Endothelial cell of umbilical vein (primary cell): ENCODE measurements at regions of chr9 and their contacts with region 1.

Region 1: DNA sequence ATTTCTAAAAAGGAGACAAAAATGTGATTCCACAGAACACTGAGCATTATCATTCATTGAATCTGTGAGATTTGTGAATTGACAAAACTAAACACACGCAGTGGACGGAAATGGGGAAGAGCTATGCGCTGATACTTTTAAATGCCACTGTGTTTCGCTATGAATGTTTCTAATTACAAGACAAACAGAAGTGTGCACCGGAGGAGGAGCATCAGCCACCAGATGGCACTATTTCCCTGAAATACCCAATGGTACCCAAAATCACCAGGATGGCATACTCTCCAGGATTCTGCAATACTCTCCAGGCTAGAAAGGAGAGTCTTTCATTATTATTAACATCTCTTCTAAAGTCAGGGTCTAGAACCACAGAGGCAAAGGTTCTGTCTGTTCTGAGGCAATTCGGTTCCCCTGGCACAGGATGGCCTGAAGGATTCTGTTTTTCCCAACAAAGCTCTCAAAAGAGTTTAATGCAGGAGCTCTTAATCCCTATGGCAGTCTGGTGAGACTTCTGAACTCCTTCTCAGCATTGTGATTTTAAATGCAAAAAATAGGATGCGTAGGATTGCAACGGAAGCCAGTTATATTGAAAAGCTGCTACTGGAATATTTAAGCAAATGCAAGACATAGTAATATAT is 13.8 kb upstream of the PUM3 start:
- DNase-seq: peak; percentile 67
- H3K4me3 ChIP-seq: no peak overlapping the region
- H3K27ac ChIP-seq: no peak overlapping the region
- H3K4me1 ChIP-seq: no peaks in the 10 kb centered on the region
- H3K27me3 ChIP-seq: peaks cover 5 to 14% of the 10 kb centered on the region in 2 experiments
- CTCF ChIP-seq: peak; percentile 75 to 76
- POLR2A ChIP-seq: no peak

Region 2: GRCh38 chr9:2676466-2676865 is 181.2 kb before region 1 on chr9:
- CTCF ChIA-PET with region 1: no interaction called
- POLR2A ChIA-PET with region 1: no interaction called
- dilution Hi-C with region 1: no loop called
- intact Hi-C with region 1: no loop called
- DNase-seq: peak; percentile 43
- H3K4me3 ChIP-seq: no peak overlapping the region
- H3K27ac ChIP-seq: no peak overlapping the region
- H3K4me1 ChIP-seq: peaks cover 4% of the 10 kb centered on the region
- H3K27me3 ChIP-seq: no peaks in the 10 kb centered on the region
- CTCF ChIP-seq: no peak
- POLR2A ChIP-seq: no peak

Region 3: GRCh38 chr9:2771662-2772061 is 86.0 kb before region 1 on chr9:
- CTCF ChIA-PET with region 1: no interaction called
- POLR2A ChIA-PET with region 1: no interaction called
- dilution Hi-C with region 1: no loop called
- intact Hi-C with region 1: no loop called
- DNase-seq: no peak
- H3K4me3 ChIP-seq: no peak overlapping the region
- H3K27ac ChIP-seq: no peak overlapping the region
- H3K4me1 ChIP-seq: no peaks in the 10 kb centered on the region
- H3K27me3 ChIP-seq: no peaks in the 10 kb centered on the region
- CTCF ChIP-seq: no peak
- POLR2A ChIP-seq: no peak

Region 4: DNA sequence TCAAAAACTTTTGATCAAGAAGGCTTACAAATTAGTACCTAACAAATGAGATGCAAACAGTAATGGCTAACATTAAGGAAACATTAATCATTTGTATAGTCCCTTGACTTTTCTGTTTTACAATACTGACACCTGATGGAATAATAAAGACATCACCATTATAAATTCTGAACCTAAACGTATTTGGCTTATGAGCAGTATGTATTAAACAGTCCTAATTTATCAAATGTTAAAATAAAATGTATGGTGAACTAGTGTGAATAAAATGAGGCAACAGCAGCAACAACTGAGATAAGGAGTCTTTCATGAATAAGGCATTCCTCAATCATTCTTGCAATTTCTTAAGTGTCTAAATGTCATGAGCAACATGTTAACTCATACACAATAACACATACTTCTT is 19.8 kb before region 1 on chr9:
- CTCF ChIA-PET with region 1: interaction called, 10 read pairs
- POLR2A ChIA-PET with region 1: no interaction called
- dilution Hi-C with region 1: no loop called
- intact Hi-C with region 1: no loop called
- DNase-seq: peak; percentile 62
- H3K4me3 ChIP-seq: peak overlapping the region in 1 of 3 experiments; percentile 29
- H3K27ac ChIP-seq: no peak overlapping the region
- H3K4me1 ChIP-seq: peaks cover 31% of the 10 kb centered on the region
- H3K27me3 ChIP-seq: no peaks in the 10 kb centered on the region
- CTCF ChIP-seq: no peak
- POLR2A ChIP-seq: no peak

Region 5: DNA sequence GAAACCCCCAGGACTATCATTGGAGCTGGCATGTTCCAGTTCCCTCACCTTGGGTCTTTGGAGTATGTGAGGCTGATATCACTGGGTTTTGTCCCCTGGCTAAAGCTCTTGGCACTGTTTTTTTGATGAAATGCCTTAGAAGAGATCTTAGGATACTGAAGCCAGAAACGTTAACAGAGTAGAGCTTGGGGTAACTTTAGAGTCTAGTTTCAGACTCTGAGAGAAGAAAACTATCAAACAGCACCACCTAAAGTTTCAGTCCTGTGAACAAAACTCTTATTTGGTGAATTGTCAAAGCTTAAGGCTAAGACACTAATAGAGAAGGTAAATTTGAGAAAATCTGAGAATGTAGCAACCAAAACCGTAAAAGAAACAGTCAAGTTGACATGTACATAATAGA is 97.9 kb after region 1 on chr9:
- CTCF ChIA-PET with region 1: interaction called, 11 read pairs
- POLR2A ChIA-PET with region 1: no interaction called
- dilution Hi-C with region 1: no loop called
- intact Hi-C with region 1: no loop called
- DNase-seq: no peak
- H3K4me3 ChIP-seq: no peak overlapping the region
- H3K27ac ChIP-seq: no peak overlapping the region
- H3K4me1 ChIP-seq: no peaks in the 10 kb centered on the region
- H3K27me3 ChIP-seq: no peaks in the 10 kb centered on the region
- CTCF ChIP-seq: no peak
- POLR2A ChIP-seq: no peak

Region 6: DNA sequence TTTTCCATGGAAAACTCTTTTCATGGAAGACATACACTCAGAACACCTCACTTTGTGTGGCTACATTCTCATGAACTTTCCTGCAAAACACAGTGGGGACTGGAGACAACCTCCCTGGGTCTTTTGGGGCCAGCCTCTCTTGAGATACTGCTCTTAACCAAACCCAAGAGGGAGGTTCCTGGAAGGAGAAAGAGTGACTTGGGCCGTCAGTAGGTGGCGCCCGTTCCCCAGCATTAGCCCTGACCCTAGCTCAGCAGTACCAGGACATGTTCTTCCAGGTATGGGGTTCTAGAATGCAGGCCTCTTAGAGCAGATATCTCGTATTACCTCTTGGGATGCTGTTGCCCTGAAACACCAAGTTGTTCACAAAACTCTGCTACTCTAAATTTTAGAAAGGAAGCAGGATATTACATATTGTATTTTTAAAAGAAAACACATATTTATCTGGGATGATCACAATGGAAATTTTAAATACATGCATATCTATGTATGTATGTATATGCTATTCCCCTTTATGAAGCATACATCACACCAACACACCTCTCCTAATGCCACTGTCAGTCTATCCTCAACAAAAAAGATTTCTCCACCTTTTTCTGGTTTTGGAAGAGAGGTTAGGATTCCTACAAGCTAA is 1458.0 kb after region 1 on chr9:
- CTCF ChIA-PET with region 1: interaction called, 3 read pairs
- POLR2A ChIA-PET with region 1: no interaction called
- dilution Hi-C with region 1: no loop called
- intact Hi-C with region 1: loop called (anchors 5 kb)
- DNase-seq: peak; percentile 85
- H3K4me3 ChIP-seq: no peak overlapping the region
- H3K27ac ChIP-seq: no peak overlapping the region
- H3K4me1 ChIP-seq: peaks cover 4% of the 10 kb centered on the region
- H3K27me3 ChIP-seq: no peaks in the 10 kb centered on the region
- CTCF ChIP-seq: peak; percentile 89 to 93
- POLR2A ChIP-seq: no peak

Region 7: DNA sequence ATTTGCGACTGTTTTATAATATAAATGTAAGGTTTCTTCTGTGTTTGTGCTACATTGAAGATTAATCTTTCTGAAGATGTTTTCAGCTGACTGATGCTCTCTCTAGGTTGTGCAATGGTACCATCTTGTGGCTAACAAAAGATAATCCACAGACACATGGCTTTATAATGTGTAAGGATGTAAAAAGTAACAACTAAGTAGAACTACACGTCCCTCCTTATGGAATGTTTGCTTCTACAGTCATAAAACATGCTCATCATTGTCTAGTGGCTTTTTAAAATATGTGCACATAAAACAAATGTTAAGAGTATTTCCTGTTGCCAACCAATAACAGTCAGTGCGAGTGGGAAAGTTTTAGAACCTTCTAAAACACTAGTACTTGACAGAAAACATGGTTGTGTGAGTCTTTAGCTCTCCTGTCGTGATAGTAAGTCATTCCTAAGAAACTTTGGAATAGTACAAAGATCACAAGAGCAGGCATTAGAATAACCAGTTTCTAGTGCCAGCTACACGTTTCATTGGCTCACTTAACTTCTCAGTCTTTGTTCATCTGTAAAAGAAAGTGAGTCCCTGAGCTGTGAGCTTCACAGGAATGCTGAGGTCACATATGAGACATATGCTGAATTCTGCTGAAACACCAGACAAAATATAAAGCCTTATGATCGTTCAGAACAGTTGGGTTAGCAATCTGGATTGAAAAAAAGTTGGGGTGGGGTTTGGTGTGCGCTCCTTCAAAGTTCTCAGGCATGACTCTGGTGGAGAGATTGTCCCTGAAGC is 1517.9 kb after region 1 on chr9:
- CTCF ChIA-PET with region 1: interaction called, 71 read pairs
- POLR2A ChIA-PET with region 1: no interaction called
- dilution Hi-C with region 1: no loop called
- intact Hi-C with region 1: loop called (anchors 2 kb)
- DNase-seq: peak; percentile 47
- H3K4me3 ChIP-seq: no peak overlapping the region
- H3K27ac ChIP-seq: no peak overlapping the region
- H3K4me1 ChIP-seq: no peaks in the 10 kb centered on the region
- H3K27me3 ChIP-seq: peaks cover 4 to 10% of the 10 kb centered on the region in 2 experiments
- CTCF ChIP-seq: peak; percentile 18 to 23
- POLR2A ChIP-seq: no peak